ENCODE measurements at regions of chr7 and their contacts with region 1.

Region 1: GRCh38 chr7:30412810-30413504 is 65.6 kb downstream of the NOD1 start:
- DNase-seq: no peak
- H3K4me3 Mint-ChIP-seq: no peak overlapping the region
- H3K27ac Mint-ChIP-seq: no peak overlapping the region
- H3K4me1 Mint-ChIP-seq: no peaks in the 10 kb centered on the region
- H3K27me3 Mint-ChIP-seq: no peaks in the 10 kb centered on the region

Region 2: GRCh38 chr7:30276203-30276900 is 136.6 kb before region 1 on chr7:
- intact Hi-C with region 1: loop called (anchors 2 kb)
- DNase-seq: peak; percentile 32
- H3K4me3 Mint-ChIP-seq: no peak overlapping the region
- H3K27ac Mint-ChIP-seq: no peak overlapping the region
- H3K4me1 Mint-ChIP-seq: peaks cover 6% of the 10 kb centered on the region
- H3K27me3 Mint-ChIP-seq: no peaks in the 10 kb centered on the region

Region 3: DNA sequence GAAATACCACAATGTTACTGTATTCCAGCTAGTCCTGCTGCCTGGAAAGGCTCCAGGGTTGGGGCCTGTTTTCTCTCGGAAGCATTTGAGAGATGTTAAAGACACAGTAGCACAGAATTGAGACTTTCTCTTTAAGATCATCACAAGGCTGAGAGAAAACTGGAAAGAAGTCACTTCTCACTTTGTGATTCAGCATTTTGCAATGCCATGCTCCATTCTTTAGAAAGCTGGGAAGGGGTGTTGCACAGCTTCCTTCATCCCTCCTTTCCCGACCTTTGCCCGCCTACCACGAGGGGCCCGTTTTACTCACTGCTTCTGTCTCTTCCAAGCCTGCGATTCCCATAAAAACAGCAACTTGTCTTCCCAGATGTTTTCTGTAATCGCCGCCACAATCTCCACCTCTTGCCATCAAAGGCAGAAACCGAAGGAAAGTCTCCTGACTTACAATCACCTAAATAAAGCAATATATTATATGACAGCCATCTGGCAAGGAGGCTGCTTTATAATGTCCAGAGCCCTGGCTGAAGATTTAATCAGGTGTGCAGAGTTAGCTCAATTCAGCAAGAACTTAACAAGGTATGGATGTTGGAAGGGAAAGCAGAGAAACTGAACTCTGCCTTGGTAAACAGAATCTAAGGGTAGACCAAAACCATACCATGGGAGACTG is 46.8 kb after region 1 on chr7:
- intact Hi-C with region 1: no loop called
- DNase-seq: no peak
- H3K4me3 Mint-ChIP-seq: no peak overlapping the region
- H3K27ac Mint-ChIP-seq: no peak overlapping the region
- H3K4me1 Mint-ChIP-seq: peaks cover 5% of the 10 kb centered on the region
- H3K27me3 Mint-ChIP-seq: no peaks in the 10 kb centered on the region

Measured in activated T-helper 2 cell treated with anti-CD3 and anti-CD28 coated beads, Interferon-gamma antibody, Interleukin-2, Interleukin-4, amounts not matched to agents 10 μg/mL and 5 μg/mL and 100 μg/mL, durations not matched to agents 14 hours and 24 hours and 36 hours (primary cell).